Activated B cell treated with CpG ODN at 0.5 μM for 24 hours (primary cell): ENCODE measurements at regions of chr12 and their contacts with region 1.

Region 1: DNA sequence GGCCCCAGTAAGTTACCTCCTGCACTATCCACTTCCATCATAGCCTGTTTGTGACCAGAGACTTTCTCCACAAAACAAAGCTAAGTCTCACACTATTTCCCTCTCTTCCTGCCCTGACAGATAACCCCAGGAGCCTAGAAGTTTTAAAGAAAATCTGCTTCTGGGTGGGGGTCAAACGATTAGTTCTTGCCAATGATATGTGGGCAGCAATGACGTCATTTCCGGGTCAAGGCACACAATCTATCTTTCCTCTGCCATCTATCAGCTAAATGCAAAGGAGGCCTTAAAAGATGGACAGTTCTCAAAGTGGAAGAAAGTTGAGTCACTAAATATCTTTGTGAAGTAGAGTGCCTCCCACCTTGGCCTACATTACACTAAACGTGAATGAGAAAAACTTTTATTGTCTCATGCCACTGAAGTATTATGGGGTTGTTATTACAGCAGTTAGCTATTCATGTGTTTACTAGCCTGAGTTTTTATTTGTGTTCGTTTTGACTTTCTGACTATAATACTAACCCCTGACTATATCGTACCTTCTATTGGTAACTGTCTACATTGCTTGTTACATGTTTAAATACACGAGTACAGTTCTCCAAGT is 86.2 kb downstream of the DENND5B start:
- DNase-seq: no peak
- ATAC-seq: no peak
- H3K4me3 Mint-ChIP-seq: no peak overlapping the region
- H3K27ac Mint-ChIP-seq: no peak overlapping the region
- H3K4me1 Mint-ChIP-seq: peaks cover 53% of the 10 kb centered on the region
- H3K27me3 Mint-ChIP-seq: no peaks in the 10 kb centered on the region
- CTCF ChIP-seq: no peak

Region 2: GRCh38 chr12:31524791-31525495 is 20.2 kb after region 1 on chr12:
- CTCF ChIA-PET with region 1: no interaction called
- POLR2A ChIA-PET with region 1: no interaction called
- intact Hi-C with region 1: loop called (anchors 2 kb)
- DNase-seq: no peak
- ATAC-seq: peak; percentile 72
- H3K4me3 Mint-ChIP-seq: peak overlapping the region; percentile 42
- H3K27ac Mint-ChIP-seq: peak overlapping the region; percentile 7
- H3K4me1 Mint-ChIP-seq: peaks cover 61% of the 10 kb centered on the region
- H3K27me3 Mint-ChIP-seq: no peaks in the 10 kb centered on the region
- CTCF ChIP-seq: no peak

Region 3: DNA sequence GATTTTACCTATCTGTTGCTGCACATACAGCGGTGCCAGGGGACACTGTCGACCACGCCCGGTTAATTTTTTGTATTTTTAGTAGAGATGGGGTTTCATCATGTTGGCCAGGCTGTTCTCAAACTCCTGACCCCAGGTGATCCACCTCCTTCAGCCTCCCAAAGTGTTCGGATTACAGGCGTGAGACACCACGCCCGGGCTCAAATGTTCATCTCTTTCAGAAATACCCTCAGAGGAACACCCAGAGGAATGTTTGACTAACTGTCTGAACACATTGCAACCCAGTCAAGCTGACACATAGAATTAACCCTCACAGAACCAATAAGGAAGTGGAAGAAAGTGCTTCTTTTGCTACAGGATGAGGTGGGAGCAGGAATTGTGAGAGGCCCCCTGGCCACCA is 139.8 kb after region 1 on chr12:
- CTCF ChIA-PET with region 1: no interaction called
- POLR2A ChIA-PET with region 1: no interaction called
- intact Hi-C with region 1: no loop called
- DNase-seq: no peak
- ATAC-seq: no peak
- H3K4me3 Mint-ChIP-seq: no peak overlapping the region
- H3K27ac Mint-ChIP-seq: no peak overlapping the region
- H3K4me1 Mint-ChIP-seq: peaks cover 30% of the 10 kb centered on the region
- H3K27me3 Mint-ChIP-seq: no peaks in the 10 kb centered on the region
- CTCF ChIP-seq: no peak